H1 (cell line): ENCODE measurements at regions of chr3 and their contacts with region 1.

Region 1: GRCh38 chr3:107938143-107938542 is 152.7 kb downstream of the CD47 start:
- DNase-seq: no peak
- H3K4me3 ChIP-seq: no peak overlapping the region
- H3K27ac ChIP-seq: no peak overlapping the region
- H3K4me1 ChIP-seq: no peaks in the 10 kb centered on the region; a peak in 1 of 7 replicates
- H3K27me3 ChIP-seq: no peaks in the 10 kb centered on the region
- CTCF ChIP-seq: peak in 2 of 3 experiments; percentile 49 to 52; a peak in 3 of 4 replicates
- EP300 ChIP-seq: no peak
- POLR2A ChIP-seq: no peak
- RAD21 ChIP-seq: peak; percentile 78 to 83

Region 2: GRCh38 chr3:107951126-107951525 is 13.0 kb after region 1 on chr3:
- CTCF ChIA-PET with region 1: interaction called, 11 read pairs
- POLR2A ChIA-PET with region 1: no interaction called
- DNase-seq: no peak
- H3K4me3 ChIP-seq: no peak overlapping the region
- H3K27ac ChIP-seq: no peak overlapping the region
- H3K4me1 ChIP-seq: no peaks in the 10 kb centered on the region
- H3K27me3 ChIP-seq: peaks cover 0 to under 1% (median 0%) of the 10 kb centered on the region in 4 experiments; a peak in 1 of 7 replicates
- CTCF ChIP-seq: no peak
- EP300 ChIP-seq: no peak
- POLR2A ChIP-seq: no peak
- RAD21 ChIP-seq: no peak